ENCODE measurements at regions of chr20 and their contacts with region 1.

Region 1: GRCh38 chr20:2742934-2743559 is 50.5 kb downstream of the EBF4 start:
- DNase-seq: peak; percentile 43
- ATAC-seq: peak; percentile 90
- H3K4me3 Mint-ChIP-seq: no peak overlapping the region
- H3K27ac Mint-ChIP-seq: no peak overlapping the region
- H3K4me1 Mint-ChIP-seq: peaks cover 3% of the 10 kb centered on the region
- H3K27me3 Mint-ChIP-seq: peaks cover 25% of the 10 kb centered on the region
- CTCF ChIP-seq: no peak

Region 2: GRCh38 chr20:2122936-2123335 is 620.1 kb before region 1 on chr20:
- CTCF ChIA-PET with region 1: no interaction called
- POLR2A ChIA-PET with region 1: no interaction called
- intact Hi-C with region 1: loop called (anchors 5 kb)
- DNase-seq: no peak
- ATAC-seq: no peak
- H3K4me3 Mint-ChIP-seq: no peak overlapping the region
- H3K27ac Mint-ChIP-seq: no peak overlapping the region
- H3K4me1 Mint-ChIP-seq: peaks cover 74% of the 10 kb centered on the region
- H3K27me3 Mint-ChIP-seq: no peaks in the 10 kb centered on the region
- CTCF ChIP-seq: no peak

Region 3: GRCh38 chr20:2523919-2524708 is 218.9 kb before region 1 on chr20:
- CTCF ChIA-PET with region 1: no interaction called
- POLR2A ChIA-PET with region 1: no interaction called
- intact Hi-C with region 1: loop called (anchors 10 kb)
- DNase-seq: peak; percentile 91
- ATAC-seq: peak; percentile 80
- H3K4me3 Mint-ChIP-seq: peak overlapping the region; percentile 90
- H3K27ac Mint-ChIP-seq: peak overlapping the region; percentile 75
- H3K4me1 Mint-ChIP-seq: peaks cover 15% of the 10 kb centered on the region
- H3K27me3 Mint-ChIP-seq: peaks cover 4% of the 10 kb centered on the region
- CTCF ChIP-seq: peak; percentile 81

Region 4: GRCh38 chr20:2688041-2688591 is 54.9 kb before region 1 on chr20:
- CTCF ChIA-PET with region 1: no interaction called
- POLR2A ChIA-PET with region 1: no interaction called
- intact Hi-C with region 1: loop called (anchors 1 kb)
- DNase-seq: no peak
- ATAC-seq: peak; percentile 16
- H3K4me3 Mint-ChIP-seq: no peak overlapping the region
- H3K27ac Mint-ChIP-seq: no peak overlapping the region
- H3K4me1 Mint-ChIP-seq: peaks cover 13% of the 10 kb centered on the region
- H3K27me3 Mint-ChIP-seq: peaks cover 46% of the 10 kb centered on the region
- CTCF ChIP-seq: no peak